Vagina (tissue), 2 donors: ENCODE measurements at regions of chr13 and their contacts with region 1.

Region 1: DNA sequence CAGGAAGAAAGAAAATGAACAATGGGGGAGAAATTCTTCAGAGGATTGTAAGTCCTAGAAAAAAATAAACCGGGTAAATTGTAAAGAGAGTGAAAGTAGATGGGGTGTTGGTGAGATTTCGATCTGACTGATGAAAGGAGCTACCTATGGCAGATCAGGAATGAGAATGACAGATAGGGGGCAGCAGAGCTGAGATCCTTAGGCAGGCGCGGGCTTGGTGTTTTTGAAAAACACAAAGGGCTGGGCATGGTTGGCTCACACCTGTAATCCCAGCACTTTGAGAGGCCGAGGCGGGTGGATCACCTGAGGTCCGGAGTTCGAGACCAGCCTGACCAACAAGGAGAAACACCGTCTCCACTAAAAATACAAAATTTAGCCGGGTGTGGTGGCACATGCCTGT is 1468.6 kb upstream of the SLC10A2 start:
- DNase-seq: no peak
- H3K4me3 ChIP-seq: no peak overlapping the region
- H3K27ac ChIP-seq: no peak overlapping the region
- H3K4me1 ChIP-seq: no peaks in the 10 kb centered on the region
- H3K27me3 ChIP-seq: no peaks in the 10 kb centered on the region
- CTCF ChIP-seq: no peak
- POLR2A ChIP-seq: no peak

Region 2: GRCh38 chr13:104422668-104423067 is 112.2 kb before region 1 on chr13:
- intact Hi-C with region 1: no loop called
- DNase-seq: no peak
- H3K4me3 ChIP-seq: no peak overlapping the region
- H3K27ac ChIP-seq: no peak overlapping the region
- H3K4me1 ChIP-seq: no peaks in the 10 kb centered on the region
- H3K27me3 ChIP-seq: no peaks in the 10 kb centered on the region
- CTCF ChIP-seq: no peak
- POLR2A ChIP-seq: no peak

Region 3: GRCh38 chr13:106423530-106423929 is 1888.7 kb after region 1 on chr13:
- intact Hi-C with region 1: loop called (anchors 5 kb)
- DNase-seq: peak in 1 of 2 donors; percentile 47
- H3K4me3 ChIP-seq: no peak overlapping the region
- H3K27ac ChIP-seq: no peak overlapping the region
- H3K4me1 ChIP-seq: no peaks in the 10 kb centered on the region
- H3K27me3 ChIP-seq: no peaks in the 10 kb centered on the region
- CTCF ChIP-seq: no peak
- POLR2A ChIP-seq: no peak